ENCODE measurements at regions of chr22 and their contacts with region 1.

Region 1: GRCh38 chr22:27212617-27213177 is 555.3 kb downstream of the MIAT start:
- DNase-seq: no peak
- ATAC-seq: peak; percentile 84

Region 2: GRCh38 chr22:27107824-27108223 is 104.9 kb before region 1 on chr22:
- intact Hi-C with region 1: loop called (anchors 10 kb)
- DNase-seq: no peak
- ATAC-seq: peak; percentile 9

Region 3: DNA sequence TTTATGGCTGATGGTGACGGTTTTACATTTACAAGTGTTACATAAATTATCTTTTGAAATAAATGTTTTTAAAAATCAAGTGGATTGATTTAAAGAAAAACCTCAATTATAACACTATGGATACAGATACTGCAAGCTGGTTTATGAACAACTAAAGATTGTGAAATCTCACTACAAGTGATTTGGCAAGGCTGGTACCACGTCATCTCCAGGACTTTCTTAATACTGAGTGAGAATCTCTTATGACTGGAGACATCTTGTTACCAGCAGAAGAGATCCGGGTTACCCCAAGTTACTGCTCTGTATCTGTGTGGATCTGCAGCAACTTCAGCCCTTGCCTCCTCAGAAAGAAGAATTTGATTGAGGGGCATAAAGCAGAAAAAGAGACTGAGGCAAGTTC is 135.9 kb after region 1 on chr22:
- intact Hi-C with region 1: no loop called
- DNase-seq: no peak
- ATAC-seq: no peak